K562 (cell line): ENCODE measurements at regions of chr17 and their contacts with region 1.

Region 1: DNA sequence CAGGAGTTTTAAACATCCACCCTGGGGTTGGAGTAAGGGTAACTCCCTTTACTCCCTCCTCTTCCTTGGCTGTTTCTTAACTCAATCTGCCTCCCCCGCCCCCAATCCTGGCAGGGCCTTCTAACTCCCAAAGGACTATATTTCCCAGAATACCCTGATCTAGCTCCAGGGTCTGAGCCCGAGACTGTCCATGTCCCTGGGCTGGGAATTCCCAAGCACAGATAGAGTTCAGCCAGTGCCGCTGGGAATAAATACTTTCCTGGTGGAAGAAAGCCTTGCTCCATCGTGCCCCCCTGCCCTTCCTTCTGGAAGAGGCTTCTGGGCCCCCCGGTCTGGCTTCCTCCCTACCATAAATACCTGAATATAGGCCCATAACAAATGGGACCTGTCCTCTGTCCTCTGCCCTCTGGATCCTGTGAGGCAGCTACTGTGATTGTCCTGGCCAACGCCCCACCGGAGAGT is 10.2 kb downstream of the BAHCC1 start:
- DNase-seq: no peak
- ATAC-seq: no peak
- H3K4me3 ChIP-seq: no peak overlapping the region
- H3K27ac ChIP-seq: no peak overlapping the region
- H3K4me1 ChIP-seq: peaks cover 28 to 81% of the 10 kb centered on the region in 2 experiments
- H3K27me3 ChIP-seq: no peaks in the 10 kb centered on the region
- CTCF ChIP-seq: no peak
- EP300 ChIP-seq: no peak
- POLR2A ChIP-seq: no peak
- RAD21 ChIP-seq: no peak

Region 2: DNA sequence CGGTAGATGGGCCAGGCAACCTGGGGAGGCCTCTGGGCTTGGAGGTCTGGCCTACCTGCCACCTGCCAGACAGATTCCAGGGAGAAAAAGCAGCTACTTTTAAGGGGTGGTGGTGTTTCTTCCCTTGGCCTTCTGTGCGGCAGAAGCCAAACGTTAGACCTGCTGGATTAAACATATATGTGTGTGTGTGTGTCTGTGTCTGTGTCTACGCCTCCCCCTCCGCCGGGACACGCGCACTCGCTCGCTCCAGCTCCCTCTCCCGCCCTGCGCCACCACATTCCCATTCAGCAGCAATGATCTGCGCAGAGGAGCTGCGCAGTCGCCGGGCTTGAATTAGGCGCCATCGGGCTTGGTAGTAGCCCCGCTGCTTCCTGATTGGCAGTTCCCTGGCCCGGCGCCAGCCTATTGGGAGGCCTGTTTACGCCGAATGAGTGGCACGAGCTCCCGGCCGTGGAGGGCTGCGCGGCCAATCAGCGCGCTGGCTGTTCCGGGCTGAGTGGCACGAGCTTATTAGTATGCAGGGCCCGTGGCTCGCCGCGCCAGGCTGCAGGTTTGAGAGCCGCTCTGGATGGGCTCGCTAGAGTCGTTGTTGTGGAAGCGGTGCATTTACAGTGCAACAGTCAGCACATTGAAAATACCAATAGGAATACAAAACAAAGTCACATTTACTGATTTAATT is 10.4 kb before region 1 on chr17 and contains the start of gene BAHCC1:
- CTCF ChIA-PET with region 1: interaction called, 4 read pairs
- POLR2A ChIA-PET with region 1: interaction called, 18 read pairs
- in situ Hi-C with region 1: no loop called
- intact Hi-C with region 1: no loop called
- DNase-seq: peak; percentile 89 to 99 (median 92)
- ATAC-seq: peak; percentile 78
- H3K4me3 ChIP-seq: peak within 1 kb of the TSS; percentile 20
- H3K27ac ChIP-seq: peak within 1 kb of the TSS; percentile 57
- H3K4me1 ChIP-seq: peaks cover 17 to 88% of the 10 kb centered on the region in 2 experiments
- H3K27me3 ChIP-seq: no peaks in the 10 kb centered on the region
- CTCF ChIP-seq: no peak
- EP300 ChIP-seq: no peak
- POLR2A ChIP-seq: peak; percentile 55; the same call in 1 of the 2 replicates
- RAD21 ChIP-seq: no peak
- polyA plus RNA-seq, gene BAHCC1: 0.14 to 0.24 TPM